ENCODE measurements at regions of chr2 and their contacts with region 1.

Region 1: GRCh38 chr2:179031731-179032408 is 18.1 kb downstream of the CCDC141 start:
- DNase-seq: peak in 7 of 14 experiments; percentile 0 to 67 (median 23)
- ATAC-seq: peak; percentile 88
- H3K4me3 ChIP-seq: peak overlapping the region; percentile 38
- H3K4me3 Mint-ChIP-seq: peak overlapping the region; percentile 82
- H3K27ac ChIP-seq: peak overlapping the region; percentile 53 to 60
- H3K27ac Mint-ChIP-seq: peak overlapping the region; percentile 99
- H3K4me1 ChIP-seq: peaks cover 4% of the 10 kb centered on the region
- H3K4me1 Mint-ChIP-seq: peaks cover 41% of the 10 kb centered on the region
- H3K27me3 ChIP-seq: no peaks in the 10 kb centered on the region
- H3K27me3 Mint-ChIP-seq: no peaks in the 10 kb centered on the region
- CTCF ChIP-seq: no peak

Region 2: GRCh38 chr2:179044500-179044899 is 12.6 kb after region 1 on chr2:
- CTCF ChIA-PET with region 1: no interaction called
- POLR2A ChIA-PET with region 1: interaction called, 52 read pairs
- intact Hi-C with region 1: loop called in 1 of 2 experiments (anchors 2 kb)
- DNase-seq: no peak
- ATAC-seq: no peak
- H3K4me3 ChIP-seq: no peak overlapping the region
- H3K4me3 Mint-ChIP-seq: no peak overlapping the region
- H3K27ac ChIP-seq: no peak overlapping the region
- H3K27ac Mint-ChIP-seq: no peak overlapping the region
- H3K4me1 ChIP-seq: no peaks in the 10 kb centered on the region
- H3K4me1 Mint-ChIP-seq: peaks cover 83% of the 10 kb centered on the region
- H3K27me3 ChIP-seq: no peaks in the 10 kb centered on the region
- H3K27me3 Mint-ChIP-seq: no peaks in the 10 kb centered on the region
- CTCF ChIP-seq: no peak

Region 3: DNA sequence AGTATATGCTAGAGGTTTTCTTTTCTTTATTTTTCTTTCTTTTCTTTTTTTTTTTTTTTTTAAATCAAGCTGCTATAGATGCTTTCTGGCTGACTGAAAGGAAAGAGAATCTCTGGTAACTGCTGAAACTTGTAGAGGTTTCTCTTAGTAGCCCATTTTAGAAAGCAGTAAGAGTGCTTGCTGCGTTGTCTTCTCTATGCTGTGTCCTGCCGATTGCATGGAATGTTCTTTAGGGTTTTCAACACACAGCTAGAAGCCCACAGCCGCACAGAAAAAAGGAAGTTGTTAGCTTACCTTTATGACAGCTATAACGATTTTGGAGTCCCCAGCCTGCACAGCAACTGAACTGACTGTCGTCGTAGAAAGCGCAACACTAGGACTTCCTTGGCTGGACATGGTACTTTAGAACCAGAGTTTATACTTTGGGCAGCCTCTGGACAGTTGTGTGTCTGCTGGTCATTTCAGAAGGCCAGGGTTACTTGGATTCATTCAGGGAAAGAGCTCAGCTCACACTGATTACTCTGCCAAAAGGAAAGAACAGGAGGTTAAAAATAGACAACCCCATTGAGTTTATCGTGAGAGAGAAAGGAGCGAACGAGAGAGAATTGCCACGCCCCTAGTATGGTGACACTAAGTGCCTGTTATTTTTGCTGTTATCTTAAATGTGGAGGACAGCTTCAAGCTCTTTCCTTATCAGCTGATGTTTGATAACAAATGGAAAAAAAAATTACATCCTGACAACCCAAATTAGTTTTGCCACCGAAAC is 17.9 kb after region 1 on chr2 and contains the start of gene CCDC141:
- CTCF ChIA-PET with region 1: no interaction called
- POLR2A ChIA-PET with region 1: interaction called, 52 read pairs
- intact Hi-C with region 1: loop called in 1 of 2 experiments (anchors 2 kb)
- DNase-seq: peak in 8 of 14 experiments; percentile 2 to 45 (median 24)
- ATAC-seq: peak; percentile 76
- H3K4me3 ChIP-seq: peak within 1 kb of the TSS; percentile 61
- H3K4me3 Mint-ChIP-seq: peak within 1 kb of the TSS; percentile 90
- H3K27ac ChIP-seq: peak within 1 kb of the TSS; percentile 63 to 71
- H3K27ac Mint-ChIP-seq: peak within 1 kb of the TSS; percentile 90
- H3K4me1 ChIP-seq: no peaks in the 10 kb centered on the region
- H3K4me1 Mint-ChIP-seq: peaks cover 59% of the 10 kb centered on the region
- H3K27me3 ChIP-seq: no peaks in the 10 kb centered on the region
- H3K27me3 Mint-ChIP-seq: no peaks in the 10 kb centered on the region
- CTCF ChIP-seq: no peak
- total RNA-seq, gene CCDC141: 30.6 to 31.5 TPM

Region 4: GRCh38 chr2:179207047-179207446 is 175.2 kb after region 1 on chr2:
- CTCF ChIA-PET with region 1: no interaction called
- POLR2A ChIA-PET with region 1: no interaction called
- intact Hi-C with region 1: no loop called
- DNase-seq: no peak
- ATAC-seq: no peak
- H3K4me3 ChIP-seq: no peak overlapping the region
- H3K4me3 Mint-ChIP-seq: no peak overlapping the region
- H3K27ac ChIP-seq: no peak overlapping the region
- H3K27ac Mint-ChIP-seq: no peak overlapping the region
- H3K4me1 ChIP-seq: no peaks in the 10 kb centered on the region
- H3K4me1 Mint-ChIP-seq: no peaks in the 10 kb centered on the region
- H3K27me3 ChIP-seq: no peaks in the 10 kb centered on the region
- H3K27me3 Mint-ChIP-seq: no peaks in the 10 kb centered on the region
- CTCF ChIP-seq: no peak

Region 5: DNA sequence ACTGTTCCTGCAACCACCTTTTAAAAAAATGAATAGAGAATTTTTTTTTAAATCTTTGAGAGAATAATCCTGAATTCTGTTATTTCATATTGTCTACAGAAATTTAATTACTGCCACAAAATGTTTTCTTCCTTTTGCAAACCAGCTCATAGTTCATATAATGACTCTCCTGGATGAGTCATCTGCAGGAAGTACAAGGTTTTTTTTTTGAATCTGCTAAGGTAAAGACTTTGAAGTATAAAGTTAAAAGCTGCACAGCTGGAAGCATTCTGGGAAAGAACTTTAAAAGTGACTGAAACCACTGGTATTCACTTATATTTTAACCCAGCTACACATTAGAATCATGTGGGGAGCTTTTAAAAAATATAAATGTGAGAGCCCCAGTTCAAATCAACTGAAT is 207.3 kb after region 1 on chr2:
- CTCF ChIA-PET with region 1: no interaction called
- POLR2A ChIA-PET with region 1: no interaction called
- intact Hi-C with region 1: loop called in 1 of 2 experiments (anchors 10 kb)
- DNase-seq: peak in 3 of 14 experiments; percentile 20 to 53 (median 48)
- ATAC-seq: peak; percentile 92
- H3K4me3 ChIP-seq: no peak overlapping the region
- H3K4me3 Mint-ChIP-seq: no peak overlapping the region
- H3K27ac ChIP-seq: no peak overlapping the region
- H3K27ac Mint-ChIP-seq: no peak overlapping the region
- H3K4me1 ChIP-seq: no peaks in the 10 kb centered on the region
- H3K4me1 Mint-ChIP-seq: peaks cover 29% of the 10 kb centered on the region
- H3K27me3 ChIP-seq: no peaks in the 10 kb centered on the region
- H3K27me3 Mint-ChIP-seq: no peaks in the 10 kb centered on the region
- CTCF ChIP-seq: no peak

Region 6: DNA sequence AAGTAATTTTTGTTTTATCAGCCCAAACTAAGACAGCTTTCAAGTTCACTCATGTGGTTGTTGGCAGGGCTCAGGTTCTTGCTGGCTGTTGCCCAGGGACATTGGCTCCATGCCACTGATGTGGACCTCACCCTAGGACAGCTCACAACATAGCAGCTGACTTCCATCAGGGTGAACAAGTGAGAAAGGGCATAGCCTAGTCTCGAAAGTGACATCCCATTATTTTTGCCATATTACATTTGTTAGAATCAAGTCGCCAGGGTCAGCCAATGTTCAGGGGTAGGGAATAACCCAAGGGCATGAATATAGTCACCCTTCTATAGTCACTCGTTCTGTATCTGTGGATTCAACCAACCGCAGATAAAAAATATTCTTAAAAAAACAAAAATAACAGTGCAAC is 985.9 kb after region 1 on chr2:
- CTCF ChIA-PET with region 1: no interaction called
- POLR2A ChIA-PET with region 1: no interaction called
- intact Hi-C with region 1: loop called in 1 of 2 experiments (anchors 10 kb)
- DNase-seq: no peak
- ATAC-seq: no peak
- H3K4me3 ChIP-seq: no peak overlapping the region
- H3K4me3 Mint-ChIP-seq: no peak overlapping the region
- H3K27ac ChIP-seq: no peak overlapping the region
- H3K27ac Mint-ChIP-seq: no peak overlapping the region
- H3K4me1 ChIP-seq: no peaks in the 10 kb centered on the region
- H3K4me1 Mint-ChIP-seq: no peaks in the 10 kb centered on the region
- H3K27me3 ChIP-seq: peaks cover 0 to 4% of the 10 kb centered on the region in 2 experiments
- H3K27me3 Mint-ChIP-seq: peaks cover 49% of the 10 kb centered on the region
- CTCF ChIP-seq: no peak

Measured in CD4-positive, alpha-beta T cell (primary cell).